WTC11 (cell line): ENCODE measurements at regions of chr17 and their contacts with region 1.

Region 1: GRCh38 chr17:8248751-8249607 is at the start of gene PFAS:
- DNase-seq: peak; percentile 96
- ATAC-seq: peak; percentile 44
- H3K4me3 Mint-ChIP-seq: peak within 1 kb of the TSS; percentile 97
- H3K27ac Mint-ChIP-seq: peak within 1 kb of the TSS; percentile 99
- H3K4me1 Mint-ChIP-seq: peaks cover 17% of the 10 kb centered on the region
- H3K27me3 Mint-ChIP-seq: no peaks in the 10 kb centered on the region
- CTCF ChIP-seq: no peak
- total RNA-seq, gene PFAS: 229 to 246 TPM (median 229 TPM) in 3 replicates

Region 2: DNA sequence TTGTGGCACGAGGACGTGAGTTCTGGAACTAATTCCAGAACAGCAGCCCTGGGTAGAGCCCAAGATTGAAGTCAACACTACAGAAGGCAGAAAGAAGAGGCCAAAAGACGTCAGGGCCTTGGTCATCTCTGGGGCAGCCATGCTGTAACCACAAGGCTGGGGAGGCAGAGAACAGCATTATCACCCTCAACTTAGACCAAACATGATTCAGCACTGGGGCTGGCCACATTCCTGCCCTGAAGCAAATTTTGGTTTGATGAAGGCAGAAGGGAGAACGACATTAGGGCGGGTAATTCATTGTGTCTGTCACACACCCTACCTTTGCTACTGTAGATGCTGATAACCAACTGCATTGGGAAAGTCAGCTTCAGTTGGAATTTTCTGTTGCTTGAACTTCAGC is 219.8 kb before region 1 on chr17:
- CTCF ChIA-PET with region 1: no interaction called
- POLR2A ChIA-PET with region 1: no interaction called
- DNase-seq: no peak
- ATAC-seq: no peak
- H3K4me3 Mint-ChIP-seq: no peak overlapping the region
- H3K27ac Mint-ChIP-seq: no peak overlapping the region
- H3K4me1 Mint-ChIP-seq: peaks cover 7% of the 10 kb centered on the region
- H3K27me3 Mint-ChIP-seq: peaks cover 17% of the 10 kb centered on the region
- CTCF ChIP-seq: no peak

Region 3: GRCh38 chr17:8222630-8223356 is 26.2 kb before region 1 on chr17:
- CTCF ChIA-PET with region 1: interaction called, 7 read pairs
- POLR2A ChIA-PET with region 1: interaction called, 31 read pairs
- DNase-seq: peak; percentile 95
- ATAC-seq: peak; percentile 18
- H3K4me3 Mint-ChIP-seq: peak overlapping the region; percentile 99
- H3K27ac Mint-ChIP-seq: peak overlapping the region; percentile 99
- H3K4me1 Mint-ChIP-seq: peaks cover 22% of the 10 kb centered on the region
- H3K27me3 Mint-ChIP-seq: peaks cover 7% of the 10 kb centered on the region
- CTCF ChIP-seq: no peak

Region 4: GRCh38 chr17:8288336-8289102 is 39.5 kb after region 1 on chr17 and contains the start of gene RANGRF:
- CTCF ChIA-PET with region 1: interaction called, 4 read pairs
- POLR2A ChIA-PET with region 1: interaction called, 12 read pairs
- DNase-seq: peak; percentile 90
- ATAC-seq: peak; percentile 90
- H3K4me3 Mint-ChIP-seq: peak within 1 kb of the TSS; percentile 92
- H3K27ac Mint-ChIP-seq: peak within 1 kb of the TSS; percentile 92
- H3K4me1 Mint-ChIP-seq: peaks cover 28% of the 10 kb centered on the region
- H3K27me3 Mint-ChIP-seq: no peaks in the 10 kb centered on the region; the same call in 1 of the 2 replicates
- CTCF ChIP-seq: no peak
- total RNA-seq, gene RANGRF: 32.7 to 36.8 TPM (median 34.6 TPM) in 3 replicates

Region 5: GRCh38 chr17:8294814-8295316 is 45.9 kb after region 1 on chr17:
- CTCF ChIA-PET with region 1: no interaction called
- POLR2A ChIA-PET with region 1: interaction called, 17 read pairs
- DNase-seq: no peak
- ATAC-seq: peak; percentile 8
- H3K4me3 Mint-ChIP-seq: peak overlapping the region; percentile 74
- H3K27ac Mint-ChIP-seq: peak overlapping the region; percentile 73
- H3K4me1 Mint-ChIP-seq: peaks cover 20% of the 10 kb centered on the region
- H3K27me3 Mint-ChIP-seq: no peaks in the 10 kb centered on the region; the same call in 1 of the 2 replicates
- CTCF ChIP-seq: no peak

Region 6: DNA sequence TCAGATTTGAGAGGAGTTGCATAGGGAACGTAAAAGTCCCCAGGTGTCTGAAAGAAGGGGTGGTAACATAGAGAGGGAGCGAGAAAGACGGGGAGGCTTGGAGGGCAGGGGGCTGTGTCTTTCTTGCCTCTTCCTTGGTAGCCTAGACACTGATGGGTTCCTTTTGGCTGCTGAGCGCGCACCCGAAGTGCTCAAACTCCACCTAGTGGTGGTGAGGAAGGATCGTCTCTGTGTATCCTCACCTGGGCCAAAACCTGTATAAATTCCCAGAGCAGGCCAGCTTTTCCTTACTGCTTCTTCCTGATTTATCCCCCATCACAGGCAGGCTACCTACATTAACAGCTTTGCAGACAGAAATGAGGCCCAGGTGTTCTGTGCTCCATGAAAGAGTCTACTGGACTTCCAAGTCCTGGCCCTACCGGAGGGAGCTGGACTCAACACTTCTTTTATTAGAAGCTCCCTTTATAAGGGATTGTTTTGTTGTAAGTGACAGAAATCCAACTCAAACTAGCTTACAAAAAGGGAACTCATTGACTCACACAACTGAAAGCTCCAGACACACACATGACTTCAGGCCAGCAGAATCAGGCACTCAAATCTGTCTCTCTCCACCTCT is 51.8 kb after region 1 on chr17:
- CTCF ChIA-PET with region 1: interaction called, 12 read pairs
- POLR2A ChIA-PET with region 1: interaction called, 17 read pairs
- DNase-seq: peak; percentile 57
- ATAC-seq: peak; percentile 98
- H3K4me3 Mint-ChIP-seq: peak overlapping the region; percentile 41
- H3K27ac Mint-ChIP-seq: no peak overlapping the region; the same call in 1 of the 2 replicates
- H3K4me1 Mint-ChIP-seq: peaks cover 6% of the 10 kb centered on the region; the same call in 1 of the 2 replicates
- H3K27me3 Mint-ChIP-seq: no peaks in the 10 kb centered on the region
- CTCF ChIP-seq: peak; percentile 80